A549 (cell line): ENCODE measurements at regions of chr9 and their contacts with region 1.

Region 1: DNA sequence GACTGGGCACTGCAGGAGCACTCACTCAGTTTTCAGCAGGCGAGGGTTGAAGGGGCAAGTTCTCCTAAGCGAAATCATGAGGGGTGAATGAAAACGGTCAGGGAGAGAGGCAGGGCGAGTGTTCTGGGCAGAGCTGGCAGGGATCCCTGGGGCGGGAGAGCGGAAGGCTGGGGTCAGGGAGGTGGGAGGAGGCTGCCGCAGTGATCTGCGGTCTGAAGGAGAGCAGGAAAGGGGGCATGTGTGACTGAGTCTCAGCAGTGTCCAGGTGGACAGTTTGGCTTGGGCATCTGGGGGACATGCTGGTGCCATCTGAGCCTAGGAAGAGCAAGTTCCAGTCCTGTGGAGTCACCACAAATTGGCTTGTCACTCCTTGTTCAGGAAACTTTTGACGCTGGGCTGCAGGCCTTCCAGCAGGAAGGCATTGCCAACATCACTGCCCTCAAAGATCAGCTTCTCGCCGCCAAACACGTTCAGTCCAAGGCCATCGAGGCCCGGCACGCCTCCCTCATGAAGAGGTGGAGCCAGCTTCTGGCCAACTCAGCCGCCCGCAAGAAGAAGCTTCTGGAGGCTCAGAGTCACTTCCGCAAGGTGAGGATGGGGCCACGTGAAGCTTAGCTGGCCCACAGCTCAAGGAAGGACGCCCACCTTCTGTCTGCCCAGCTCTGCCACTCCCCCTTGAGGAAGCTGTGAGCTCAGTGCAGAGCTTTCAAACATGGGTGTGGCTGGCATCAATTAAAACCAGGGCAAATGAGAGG is 31.1 kb downstream of the DYNC2I2 start:
- DNase-seq: no peak
- ATAC-seq: no peak
- H3K4me3 ChIP-seq: no peak overlapping the region
- H3K27ac ChIP-seq: no peak overlapping the region
- H3K4me1 ChIP-seq: peaks cover 26% of the 10 kb centered on the region
- CTCF ChIP-seq: no peak
- EP300 ChIP-seq: no peak
- POLR2A ChIP-seq: no peak
- RAD21 ChIP-seq: no peak

Region 2: DNA sequence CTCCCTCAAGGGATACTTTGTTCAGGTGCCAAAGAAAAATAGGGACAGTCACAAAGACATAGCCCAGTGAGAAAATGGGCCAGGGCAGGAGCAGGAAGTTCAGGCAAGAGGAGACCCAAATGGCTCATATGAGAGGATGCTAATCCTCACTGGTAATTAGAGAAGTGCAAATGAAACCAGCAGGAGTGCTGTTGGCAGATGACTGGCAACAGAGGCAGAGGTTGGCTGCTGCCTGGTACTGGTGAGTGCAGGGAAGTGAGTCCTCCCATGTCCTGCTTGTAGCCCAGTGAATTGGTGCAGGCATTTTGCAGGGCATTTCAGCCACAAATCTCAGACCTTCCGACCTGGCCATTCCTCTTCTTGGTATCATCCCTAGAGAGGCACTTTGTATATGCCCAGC is 146.3 kb before region 1 on chr9:
- CTCF ChIA-PET with region 1: no interaction called
- POLR2A ChIA-PET with region 1: no interaction called
- DNase-seq: no peak
- ATAC-seq: no peak
- H3K4me3 ChIP-seq: no peak overlapping the region
- H3K27ac ChIP-seq: no peak overlapping the region
- H3K4me1 ChIP-seq: no peaks in the 10 kb centered on the region
- CTCF ChIP-seq: no peak
- EP300 ChIP-seq: no peak
- POLR2A ChIP-seq: no peak
- RAD21 ChIP-seq: no peak

Region 3: DNA sequence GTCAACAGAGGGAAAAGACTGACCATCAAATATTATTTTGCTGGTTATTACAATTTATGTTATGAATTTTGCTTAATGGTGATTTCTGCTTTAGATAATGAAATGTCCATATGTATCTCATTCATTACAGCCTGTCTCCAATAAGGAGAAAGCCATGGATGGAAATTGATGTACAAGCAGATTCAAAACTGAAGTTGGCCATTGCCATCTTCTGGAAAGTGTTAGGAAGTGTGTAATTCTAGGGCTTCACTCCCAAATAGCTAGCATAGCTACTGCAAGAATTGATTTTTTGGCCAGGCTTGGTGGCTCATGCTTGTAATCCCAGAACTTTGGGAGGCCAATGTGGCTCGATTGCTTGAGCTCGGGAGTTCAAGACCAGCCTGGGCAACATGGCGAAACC is 14.7 kb before region 1 on chr9:
- CTCF ChIA-PET with region 1: interaction called, 12 read pairs
- POLR2A ChIA-PET with region 1: no interaction called
- DNase-seq: no peak
- ATAC-seq: no peak
- H3K4me3 ChIP-seq: no peak overlapping the region
- H3K27ac ChIP-seq: no peak overlapping the region
- H3K4me1 ChIP-seq: no peaks in the 10 kb centered on the region
- CTCF ChIP-seq: no peak
- EP300 ChIP-seq: no peak
- POLR2A ChIP-seq: no peak
- RAD21 ChIP-seq: no peak

Region 4: DNA sequence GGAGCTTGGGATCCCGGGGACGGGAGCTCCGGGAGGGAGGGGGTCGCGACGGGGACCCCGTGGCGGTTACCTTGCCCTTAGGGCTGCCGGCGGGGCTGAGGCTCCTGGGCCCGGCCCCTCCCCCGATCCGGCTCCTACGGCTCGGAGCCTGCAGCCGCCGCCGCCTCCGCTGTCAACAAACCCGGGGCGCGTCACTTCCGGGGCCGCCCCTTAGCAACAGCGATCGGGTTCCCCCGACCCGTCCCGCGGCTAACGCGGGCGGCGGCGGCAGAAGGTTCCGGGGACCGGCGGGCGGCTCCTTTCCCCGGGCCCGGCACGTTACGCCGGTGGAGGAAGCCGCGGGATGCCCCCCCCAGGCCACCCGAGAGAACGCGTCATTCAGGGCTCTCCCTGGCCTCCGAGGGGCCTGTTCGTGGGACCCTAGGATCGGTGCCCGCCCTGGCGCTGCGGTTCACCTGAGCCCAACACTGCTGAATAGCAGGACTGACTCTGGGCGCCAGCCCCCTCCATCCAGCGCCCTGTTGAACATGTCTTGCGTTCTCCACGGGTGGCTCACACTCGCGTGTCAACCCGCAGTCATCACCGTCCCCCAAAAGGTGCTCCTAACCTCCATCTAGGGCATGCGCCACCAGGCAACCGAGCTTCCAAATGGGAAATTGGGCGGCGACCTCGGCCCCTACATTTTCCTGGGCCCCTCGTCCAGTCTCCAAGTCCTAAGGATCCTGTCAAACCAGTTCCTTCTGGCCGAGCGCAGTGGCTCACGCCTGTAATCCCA is 146.4 kb after region 1 on chr9 and contains the start of gene ZER1:
- CTCF ChIA-PET with region 1: no interaction called
- POLR2A ChIA-PET with region 1: no interaction called
- DNase-seq: peak; percentile 89 to 97
- ATAC-seq: peak; percentile 96 to 98
- H3K4me3 ChIP-seq: peak within 1 kb of the TSS; percentile 76
- H3K27ac ChIP-seq: peak within 1 kb of the TSS; percentile 87 to 96
- H3K4me1 ChIP-seq: peaks cover 5% of the 10 kb centered on the region; the same call in 1 of the 3 replicates
- CTCF ChIP-seq: no peak
- EP300 ChIP-seq: no peak
- POLR2A ChIP-seq: peak; percentile 30; the same call in 1 of the 2 replicates
- RAD21 ChIP-seq: peak in 1 of 2 experiments; percentile 41; a peak in 1 of 5 replicates
- polyA plus RNA-seq, gene ZER1: 13.4 and 16.2 TPM in 2 replicates